ENCODE measurements at regions of chr3 and their contacts with region 1.

Region 1: GRCh38 chr3:184887574-184887973 is 75.6 kb downstream of the VPS8 start:
- DNase-seq: no peak
- ATAC-seq: no peak
- H3K4me3 ChIP-seq: no peak overlapping the region
- H3K27ac ChIP-seq: no peak overlapping the region
- H3K4me1 ChIP-seq: no peaks in the 10 kb centered on the region
- H3K27me3 ChIP-seq: no peaks in the 10 kb centered on the region
- CTCF ChIP-seq: no peak

Region 2: GRCh38 chr3:184490981-184491576 is 396.5 kb before region 1 on chr3:
- CTCF ChIA-PET with region 1: no interaction called
- POLR2A ChIA-PET with region 1: no interaction called
- in situ Hi-C with region 1: no loop called
- intact Hi-C with region 1: no loop called
- DNase-seq: no peak
- ATAC-seq: peak; percentile 74
- H3K4me3 ChIP-seq: peak overlapping the region; percentile 4; a peak in 2 of 4 replicates
- H3K27ac ChIP-seq: no peak overlapping the region
- H3K4me1 ChIP-seq: peaks cover 8% of the 10 kb centered on the region; the same call in 1 of the 2 replicates
- H3K27me3 ChIP-seq: peaks cover 40% of the 10 kb centered on the region
- CTCF ChIP-seq: no peak; the same call in 1 of the 2 replicates

Region 3: DNA sequence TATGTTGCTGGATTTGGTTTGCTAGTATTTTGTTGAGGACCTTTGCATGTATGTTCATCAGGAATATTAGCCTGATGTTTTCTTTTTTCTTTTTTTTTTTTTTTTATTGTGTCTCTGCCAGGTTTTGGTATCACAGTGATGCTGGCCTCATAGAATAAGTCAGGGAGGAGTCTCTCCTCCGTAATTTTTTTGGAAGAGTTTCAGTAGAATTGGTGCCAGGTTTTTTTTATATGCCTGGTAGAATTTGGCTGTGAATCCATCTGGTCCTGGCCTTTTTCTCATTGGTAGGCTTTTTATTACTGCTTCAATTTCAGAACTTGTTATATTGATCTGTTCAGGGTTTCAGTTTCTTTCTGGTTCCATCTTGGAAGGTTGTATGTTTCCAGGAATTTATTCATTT is 90.2 kb after region 1 on chr3:
- CTCF ChIA-PET with region 1: no interaction called
- POLR2A ChIA-PET with region 1: interaction called, 10 read pairs
- in situ Hi-C with region 1: no loop called
- intact Hi-C with region 1: no loop called
- DNase-seq: no peak
- ATAC-seq: no peak
- H3K4me3 ChIP-seq: no peak overlapping the region
- H3K27ac ChIP-seq: no peak overlapping the region
- H3K4me1 ChIP-seq: no peaks in the 10 kb centered on the region
- H3K27me3 ChIP-seq: no peaks in the 10 kb centered on the region
- CTCF ChIP-seq: no peak

Measured in Panc1 (cell line).